B cell (primary cell): ENCODE measurements at regions of chr17 and their contacts with region 1.

Region 1: GRCh38 chr17:45218895-45219661 is 2.6 kb upstream of the FMNL1 start:
- DNase-seq: peak; percentile 88
- ATAC-seq: peak; percentile 28
- H3K4me3 ChIP-seq: no peak overlapping the region
- H3K4me3 Mint-ChIP-seq: peak overlapping the region; percentile 86
- H3K27ac ChIP-seq: no peak overlapping the region
- H3K27ac Mint-ChIP-seq: peak overlapping the region; percentile 82
- H3K4me1 ChIP-seq: peaks cover 19 to 37% of the 10 kb centered on the region in 2 donors
- H3K4me1 Mint-ChIP-seq: peaks cover 33% of the 10 kb centered on the region
- H3K27me3 ChIP-seq: no peaks in the 10 kb centered on the region
- H3K27me3 Mint-ChIP-seq: no peaks in the 10 kb centered on the region
- CTCF ChIP-seq: peak; percentile 93

Region 2: GRCh38 chr17:45148183-45149036 is 70.7 kb before region 1 on chr17 and contains the start of gene HEXIM1:
- CTCF ChIA-PET with region 1: interaction called, 69 read pairs
- POLR2A ChIA-PET with region 1: interaction called, 5 read pairs
- intact Hi-C with region 1: no loop called
- DNase-seq: peak; percentile 100
- ATAC-seq: peak; percentile 74
- H3K4me3 ChIP-seq: peak within 1 kb of the TSS; percentile 69 to 99 (median 85)
- H3K4me3 Mint-ChIP-seq: peak within 1 kb of the TSS; percentile 91
- H3K27ac ChIP-seq: peak within 1 kb of the TSS; percentile 97 to 98
- H3K27ac Mint-ChIP-seq: peak within 1 kb of the TSS; percentile 99
- H3K4me1 ChIP-seq: peaks cover 38 to 66% of the 10 kb centered on the region in 2 donors
- H3K4me1 Mint-ChIP-seq: peaks cover 61% of the 10 kb centered on the region
- H3K27me3 ChIP-seq: no peaks in the 10 kb centered on the region
- H3K27me3 Mint-ChIP-seq: no peaks in the 10 kb centered on the region
- CTCF ChIP-seq: no peak
- total RNA-seq, gene HEXIM1: 48.9 and 49.6 TPM in 2 replicates

Region 3: DNA sequence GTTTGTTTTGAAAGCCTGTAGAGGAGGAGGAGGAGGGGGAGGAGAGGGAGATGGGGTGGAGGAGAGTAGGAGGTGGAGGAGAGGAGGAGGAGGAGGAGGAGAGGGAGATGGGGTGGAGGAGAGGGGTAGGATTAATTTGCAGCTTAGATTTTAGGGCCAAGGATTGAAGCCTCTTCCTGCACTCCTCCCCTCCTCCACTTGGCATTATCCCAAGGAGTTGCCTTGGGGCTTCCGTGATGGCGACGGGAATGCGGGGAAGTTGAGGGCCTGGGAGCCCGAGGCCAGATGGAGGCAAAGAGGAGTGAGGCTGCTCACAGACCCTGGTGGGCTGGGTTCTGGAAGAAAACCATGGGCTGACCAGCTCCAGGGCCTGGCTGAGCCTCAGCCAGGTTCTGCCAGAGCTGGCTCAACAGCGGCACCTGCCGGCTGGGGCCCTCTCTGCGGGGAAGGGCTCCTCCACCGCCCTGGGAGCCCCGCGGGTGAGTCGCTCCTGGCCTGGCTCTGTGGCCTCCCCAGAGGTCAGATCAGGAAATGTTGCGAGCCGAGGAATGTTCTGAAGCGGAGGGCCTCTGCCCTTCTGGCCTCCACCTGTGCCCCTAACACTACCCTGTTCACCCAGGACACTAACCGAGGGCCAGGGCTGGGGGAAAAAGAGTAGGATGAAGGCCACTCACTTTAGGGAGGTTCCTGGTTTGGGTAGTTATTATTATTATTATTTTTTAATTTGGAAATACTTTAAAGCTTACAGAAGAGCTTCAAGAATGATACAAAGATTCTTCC is 21.3 kb before region 1 on chr17:
- CTCF ChIA-PET with region 1: interaction called, 23 read pairs
- POLR2A ChIA-PET with region 1: no interaction called
- intact Hi-C with region 1: no loop called
- DNase-seq: peak; percentile 87
- ATAC-seq: peak; percentile 100
- H3K4me3 ChIP-seq: no peak overlapping the region
- H3K4me3 Mint-ChIP-seq: no peak overlapping the region
- H3K27ac ChIP-seq: no peak overlapping the region
- H3K27ac Mint-ChIP-seq: peak overlapping the region; percentile 15
- H3K4me1 ChIP-seq: peaks cover 0 to 6% of the 10 kb centered on the region in 2 donors
- H3K4me1 Mint-ChIP-seq: peaks cover 9% of the 10 kb centered on the region
- H3K27me3 ChIP-seq: no peaks in the 10 kb centered on the region
- H3K27me3 Mint-ChIP-seq: no peaks in the 10 kb centered on the region
- CTCF ChIP-seq: peak; percentile 97

Region 4: GRCh38 chr17:45247429-45248131 is 28.5 kb after region 1 on chr17:
- CTCF ChIA-PET with region 1: interaction called, 737 read pairs
- POLR2A ChIA-PET with region 1: interaction called, 31 read pairs
- intact Hi-C with region 1: loop called (anchors 1 kb)
- DNase-seq: peak; percentile 97
- ATAC-seq: peak; percentile 88
- H3K4me3 ChIP-seq: peak overlapping the region; percentile 2 to 81 (median 78)
- H3K4me3 Mint-ChIP-seq: peak overlapping the region; percentile 92
- H3K27ac ChIP-seq: peak overlapping the region; percentile 82 to 92
- H3K27ac Mint-ChIP-seq: peak overlapping the region; percentile 96
- H3K4me1 ChIP-seq: peaks cover 20 to 22% of the 10 kb centered on the region in 2 donors
- H3K4me1 Mint-ChIP-seq: peaks cover 34% of the 10 kb centered on the region
- H3K27me3 ChIP-seq: no peaks in the 10 kb centered on the region
- H3K27me3 Mint-ChIP-seq: no peaks in the 10 kb centered on the region
- CTCF ChIP-seq: no peak

Region 5: DNA sequence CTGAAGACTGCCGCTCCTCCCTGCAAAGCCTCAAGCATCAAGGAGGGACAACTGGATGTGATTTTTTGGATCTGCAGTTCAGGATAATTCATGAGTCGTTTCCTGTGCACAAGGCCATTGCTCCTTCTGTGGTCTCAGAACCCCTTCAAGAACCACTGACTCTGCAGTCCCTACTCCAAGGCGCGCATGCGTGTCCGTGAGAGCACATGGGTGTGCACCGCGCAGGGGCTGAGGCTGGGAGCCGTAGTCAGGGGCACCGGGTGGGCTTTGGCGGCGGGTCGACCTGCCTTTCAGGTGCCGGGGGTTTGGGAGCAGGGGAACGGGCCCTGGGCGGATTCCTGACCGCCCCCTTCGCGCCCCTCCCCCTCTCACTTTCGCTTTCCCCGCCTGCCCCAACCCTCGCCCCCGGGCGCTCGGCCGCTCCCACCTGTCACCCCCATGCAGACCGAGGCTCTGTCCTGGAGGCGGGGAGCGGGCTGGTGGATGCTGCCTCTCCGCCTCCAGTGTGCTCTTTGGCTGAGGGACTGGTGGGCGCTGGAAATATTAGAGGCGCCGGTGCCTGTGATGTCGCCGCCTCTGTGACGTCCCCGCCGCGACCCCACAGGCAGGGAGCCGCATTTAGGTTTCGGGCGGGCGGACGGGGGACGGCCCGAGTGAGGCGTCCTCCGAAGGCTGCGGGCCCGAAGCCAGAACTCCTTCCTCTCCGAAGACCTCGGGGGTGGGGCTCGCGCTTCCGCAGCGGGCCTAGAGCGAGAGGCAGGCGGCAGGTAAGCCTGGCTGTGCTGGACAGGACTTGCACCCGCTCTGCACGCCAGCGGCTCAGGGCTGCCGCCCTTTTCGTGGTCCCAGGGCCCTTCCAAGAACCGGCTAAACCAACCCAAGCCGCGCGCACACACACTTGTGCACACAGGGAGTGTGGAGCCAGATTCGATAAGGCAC is 42.8 kb after region 1 on chr17 and contains the start of gene SPATA32:
- CTCF ChIA-PET with region 1: interaction called, 17 read pairs
- POLR2A ChIA-PET with region 1: interaction called, 3 read pairs
- intact Hi-C with region 1: no loop called
- DNase-seq: peak; percentile 68
- ATAC-seq: peak; percentile 71
- H3K4me3 ChIP-seq: peak within 1 kb of the TSS; percentile 19 to 81 (median 73)
- H3K4me3 Mint-ChIP-seq: peak within 1 kb of the TSS; percentile 87
- H3K27ac ChIP-seq: peak within 1 kb of the TSS; percentile 51 to 62
- H3K27ac Mint-ChIP-seq: peak within 1 kb of the TSS; percentile 78
- H3K4me1 ChIP-seq: peaks cover 5 to 18% of the 10 kb centered on the region in 2 donors
- H3K4me1 Mint-ChIP-seq: peaks cover 16% of the 10 kb centered on the region
- H3K27me3 ChIP-seq: no peaks in the 10 kb centered on the region
- H3K27me3 Mint-ChIP-seq: no peaks in the 10 kb centered on the region
- CTCF ChIP-seq: no peak
- total RNA-seq, gene SPATA32: 0.27 and 0.52 TPM in 2 replicates

Region 6: DNA sequence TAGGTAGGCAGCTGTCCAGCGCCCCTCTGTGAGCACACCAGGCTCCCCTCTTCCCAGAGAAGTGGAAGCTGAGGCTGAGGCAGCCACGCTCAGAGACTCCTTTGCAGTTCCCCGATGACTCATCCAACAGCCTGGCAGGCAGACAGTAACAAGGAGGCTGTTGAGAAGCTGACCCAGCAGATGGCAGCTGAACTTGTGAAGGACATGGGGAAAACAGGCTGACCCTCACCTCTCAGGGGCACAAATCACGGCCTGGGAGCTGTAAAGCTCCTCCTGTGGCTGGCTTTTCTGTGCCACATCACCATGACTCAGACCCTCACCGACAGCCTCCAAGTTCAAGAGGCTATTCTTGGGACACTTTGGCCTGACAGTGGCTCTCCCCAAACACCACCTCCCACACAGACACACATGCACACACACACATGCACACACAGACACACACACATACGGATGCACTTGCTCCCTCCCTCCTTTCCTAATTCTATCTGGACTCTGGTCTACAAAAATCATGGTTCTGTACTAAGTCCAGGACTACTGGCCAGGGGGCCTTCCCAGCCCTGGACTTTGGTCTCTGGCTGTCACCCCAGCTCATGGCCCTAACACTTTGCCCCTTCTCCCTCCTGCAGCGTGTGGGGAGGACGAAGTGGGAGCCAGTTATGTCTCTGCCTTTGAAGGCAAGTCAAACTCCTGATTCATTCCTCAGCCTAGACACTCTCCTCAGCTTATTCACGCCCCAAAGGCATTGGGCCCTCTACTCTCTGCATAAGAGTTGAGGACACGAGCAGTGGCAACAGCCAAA is 74.5 kb after region 1 on chr17:
- CTCF ChIA-PET with region 1: interaction called, 14 read pairs
- POLR2A ChIA-PET with region 1: interaction called, 3 read pairs
- intact Hi-C with region 1: no loop called
- DNase-seq: no peak
- ATAC-seq: no peak
- H3K4me3 ChIP-seq: no peak overlapping the region
- H3K4me3 Mint-ChIP-seq: peak overlapping the region; percentile 56
- H3K27ac ChIP-seq: no peak overlapping the region
- H3K27ac Mint-ChIP-seq: peak overlapping the region; percentile 86
- H3K4me1 ChIP-seq: peaks cover 75 to 84% of the 10 kb centered on the region in 2 donors
- H3K4me1 Mint-ChIP-seq: peaks cover 78% of the 10 kb centered on the region
- H3K27me3 ChIP-seq: no peaks in the 10 kb centered on the region
- H3K27me3 Mint-ChIP-seq: no peaks in the 10 kb centered on the region
- CTCF ChIP-seq: no peak

Region 7: GRCh38 chr17:45353043-45353442 is 134.0 kb after region 1 on chr17:
- CTCF ChIA-PET with region 1: no interaction called
- POLR2A ChIA-PET with region 1: no interaction called
- intact Hi-C with region 1: no loop called
- DNase-seq: peak; percentile 41
- ATAC-seq: peak; percentile 73
- H3K4me3 ChIP-seq: no peak overlapping the region
- H3K4me3 Mint-ChIP-seq: no peak overlapping the region
- H3K27ac ChIP-seq: no peak overlapping the region
- H3K27ac Mint-ChIP-seq: no peak overlapping the region
- H3K4me1 ChIP-seq: peaks cover 4 to 5% of the 10 kb centered on the region in 2 donors
- H3K4me1 Mint-ChIP-seq: peaks cover 9% of the 10 kb centered on the region
- H3K27me3 ChIP-seq: no peaks in the 10 kb centered on the region
- H3K27me3 Mint-ChIP-seq: peaks cover 10% of the 10 kb centered on the region
- CTCF ChIP-seq: no peak

Region 8: DNA sequence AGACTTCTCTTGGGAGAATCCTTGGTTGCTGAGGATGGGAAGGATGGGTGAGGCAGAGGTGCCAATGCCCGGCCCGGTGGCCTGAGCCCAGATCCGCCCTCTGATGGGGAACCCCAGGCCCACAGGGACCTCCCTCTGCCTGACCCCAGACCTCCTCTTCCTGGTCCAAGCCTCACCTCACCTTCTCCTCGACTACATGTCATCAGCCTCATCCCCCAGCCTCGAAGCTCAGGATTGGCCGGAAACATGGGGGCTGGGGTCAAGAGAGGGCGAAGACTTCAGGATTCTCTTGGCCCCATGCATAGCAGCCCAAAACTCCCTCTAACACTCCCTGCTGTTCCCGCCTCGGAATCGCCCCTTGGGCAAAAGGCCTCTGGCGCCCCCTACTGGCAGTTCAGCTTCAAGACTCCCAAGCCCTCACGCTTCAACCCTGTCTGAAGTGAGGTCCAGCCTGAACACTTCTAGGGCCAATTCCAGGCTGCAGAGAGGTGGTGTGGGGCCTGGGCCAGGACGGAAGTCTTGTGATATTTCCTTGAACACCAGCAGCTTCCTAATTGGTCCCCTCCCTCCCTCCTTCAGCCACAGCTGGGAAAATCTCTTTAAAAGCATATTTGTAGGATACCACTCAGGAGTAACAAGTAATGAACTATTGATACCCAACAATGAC is 166.4 kb after region 1 on chr17:
- CTCF ChIA-PET with region 1: interaction called, 108 read pairs
- POLR2A ChIA-PET with region 1: interaction called, 6 read pairs
- intact Hi-C with region 1: loop called (anchors 1 kb)
- DNase-seq: peak; percentile 89
- ATAC-seq: peak; percentile 96
- H3K4me3 ChIP-seq: no peak overlapping the region
- H3K4me3 Mint-ChIP-seq: no peak overlapping the region
- H3K27ac ChIP-seq: no peak overlapping the region
- H3K27ac Mint-ChIP-seq: peak overlapping the region; percentile 16
- H3K4me1 ChIP-seq: peaks cover 5 to 12% of the 10 kb centered on the region in 2 donors
- H3K4me1 Mint-ChIP-seq: peaks cover 17% of the 10 kb centered on the region
- H3K27me3 ChIP-seq: peaks cover 0 to 12% (median 2%) of the 10 kb centered on the region in 4 experiments
- H3K27me3 Mint-ChIP-seq: peaks cover 16% of the 10 kb centered on the region
- CTCF ChIP-seq: peak; percentile 98